ENCODE measurements at regions of chr20 and their contacts with region 1.

Region 1: GRCh38 chr20:14337400-14338171 is at the start of gene FLRT3:
- DNase-seq: peak; percentile 88
- H3K4me3 ChIP-seq: peak within 1 kb of the TSS; percentile 41 to 58 (median 52)
- H3K27ac ChIP-seq: peak within 1 kb of the TSS; percentile 47 to 84 (median 80)
- H3K4me1 ChIP-seq: peaks cover 0 to 18% (median 7%) of the 10 kb centered on the region in 4 donors
- H3K27me3 ChIP-seq: no peaks in the 10 kb centered on the region
- CTCF ChIP-seq: peak; percentile 47 to 82 (median 70)
- EP300 ChIP-seq: no peak
- POLR2A ChIP-seq: peak; percentile 66 to 79
- total RNA-seq, gene FLRT3: 1.7 to 9.6 (median 6.0) TPM

Region 2: DNA sequence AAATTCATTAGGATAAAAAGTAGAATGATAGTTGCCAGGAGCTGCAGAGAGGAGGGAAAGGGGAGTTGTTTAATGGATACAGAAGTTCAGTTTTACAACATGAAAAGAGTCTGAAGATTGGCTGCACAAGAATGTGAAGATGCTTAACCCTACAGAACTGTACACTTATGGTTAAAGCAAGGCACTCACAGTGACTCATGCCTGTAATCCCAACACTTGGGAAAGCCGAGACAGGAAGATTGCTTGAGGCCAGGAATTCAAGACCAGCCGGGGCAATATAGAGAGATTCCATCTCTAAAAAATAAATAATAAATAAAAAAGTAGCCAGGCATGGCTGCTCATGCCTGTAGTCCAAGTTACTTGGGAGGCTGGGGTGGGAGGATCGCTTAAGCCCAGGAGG is 872.9 kb before region 1 on chr20:
- intact Hi-C with region 1: no loop called
- DNase-seq: no peak
- H3K4me3 ChIP-seq: no peak overlapping the region
- H3K27ac ChIP-seq: no peak overlapping the region
- H3K4me1 ChIP-seq: peaks cover 0 to 13% (median 2%) of the 10 kb centered on the region in 4 donors
- H3K27me3 ChIP-seq: no peaks in the 10 kb centered on the region
- CTCF ChIP-seq: no peak
- EP300 ChIP-seq: no peak
- POLR2A ChIP-seq: no peak

Region 3: GRCh38 chr20:15654208-15654645 is 1316.6 kb after region 1 on chr20:
- intact Hi-C with region 1: loop called (anchors 10 kb)
- DNase-seq: no peak
- H3K4me3 ChIP-seq: no peak overlapping the region
- H3K27ac ChIP-seq: no peak overlapping the region
- H3K4me1 ChIP-seq: peaks cover 0 to 32% (median 18%) of the 10 kb centered on the region in 4 donors
- H3K27me3 ChIP-seq: no peaks in the 10 kb centered on the region
- CTCF ChIP-seq: peak in 3 of 4 experiments; percentile 22 to 39 (median 22)
- EP300 ChIP-seq: no peak
- POLR2A ChIP-seq: no peak

Region 4: GRCh38 chr20:15759594-15759993 is 1422.0 kb after region 1 on chr20:
- intact Hi-C with region 1: loop called (anchors 5 kb)
- DNase-seq: no peak
- H3K4me3 ChIP-seq: peak overlapping the region in 1 of 4 donors; percentile 7
- H3K27ac ChIP-seq: peak overlapping the region in 2 of 4 donors; percentile 38 to 42
- H3K4me1 ChIP-seq: peaks cover 0 to 16% (median 15%) of the 10 kb centered on the region in 4 donors
- H3K27me3 ChIP-seq: no peaks in the 10 kb centered on the region
- CTCF ChIP-seq: peak in 2 of 4 experiments; percentile 12 to 16
- EP300 ChIP-seq: no peak
- POLR2A ChIP-seq: no peak

Region 5: DNA sequence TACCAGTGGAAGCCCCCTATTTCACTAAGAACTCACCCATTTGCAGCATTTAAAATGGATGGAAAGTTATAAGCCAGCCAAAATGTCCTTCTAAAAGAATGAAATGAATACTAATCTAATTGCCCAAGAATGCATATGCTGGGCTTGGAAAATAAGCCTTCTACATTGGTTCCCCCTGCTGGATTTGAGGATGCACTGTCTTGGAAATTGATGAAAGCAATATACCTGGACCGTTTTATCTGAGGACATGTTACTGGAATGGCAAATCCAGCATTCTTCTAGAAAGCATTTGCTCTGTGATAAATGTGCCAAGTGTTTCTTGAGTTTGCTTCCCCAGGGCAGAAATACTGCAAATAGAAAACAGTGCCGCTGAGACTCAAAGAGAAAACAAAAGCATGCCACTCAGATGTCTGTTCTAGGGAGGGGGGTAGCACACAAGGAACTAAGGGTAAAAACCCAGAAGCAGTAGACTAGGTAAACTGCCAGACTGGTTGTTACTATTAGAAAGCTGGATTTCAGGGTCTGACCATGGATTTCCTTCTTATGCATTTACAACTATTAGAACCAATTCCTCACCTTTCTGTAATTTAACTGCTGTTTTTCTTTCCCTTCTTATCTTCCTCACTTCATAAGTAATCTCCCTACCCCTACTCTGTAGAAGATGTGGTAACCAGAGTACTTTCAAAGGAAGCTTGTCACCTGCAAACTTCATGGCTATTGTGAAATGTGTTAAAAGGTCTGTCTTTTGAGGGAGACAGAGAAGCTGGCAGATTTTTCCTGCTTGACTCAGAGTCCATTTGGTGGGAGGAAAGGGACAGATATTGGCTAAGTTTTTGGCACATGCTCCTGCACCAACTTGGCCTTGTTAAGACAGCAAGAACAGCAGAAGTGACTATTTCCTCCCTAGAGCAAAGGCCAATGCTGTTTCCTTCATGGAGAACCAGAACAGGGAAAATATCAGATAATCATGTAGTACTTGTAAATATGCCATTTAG is 1593.0 kb after region 1 on chr20:
- intact Hi-C with region 1: loop called (anchors 5 kb)
- DNase-seq: no peak
- H3K4me3 ChIP-seq: no peak overlapping the region
- H3K27ac ChIP-seq: no peak overlapping the region
- H3K4me1 ChIP-seq: peaks cover 0 to 9% (median 4%) of the 10 kb centered on the region in 4 donors
- H3K27me3 ChIP-seq: no peaks in the 10 kb centered on the region
- CTCF ChIP-seq: peak; percentile 39 to 72 (median 54)
- EP300 ChIP-seq: no peak
- POLR2A ChIP-seq: no peak

Measured in sigmoid colon (tissue), 7 donors.